Panc1 (cell line): ENCODE measurements at regions of chr10 and their contacts with region 1.

Region 1: GRCh38 chr10:73459683-73460314 is 26.4 kb upstream of the MSS51 start:
- DNase-seq: no peak
- ATAC-seq: no peak
- H3K4me3 ChIP-seq: no peak overlapping the region
- H3K27ac ChIP-seq: no peak overlapping the region
- H3K4me1 ChIP-seq: no peaks in the 10 kb centered on the region
- H3K27me3 ChIP-seq: no peaks in the 10 kb centered on the region
- CTCF ChIP-seq: no peak

Region 2: GRCh38 chr10:73480158-73480557 is 20.4 kb after region 1 on chr10:
- CTCF ChIA-PET with region 1: no interaction called
- POLR2A ChIA-PET with region 1: interaction called, 10 read pairs
- in situ Hi-C with region 1: no loop called
- intact Hi-C with region 1: no loop called
- DNase-seq: no peak
- ATAC-seq: no peak
- H3K4me3 ChIP-seq: no peak overlapping the region
- H3K27ac ChIP-seq: no peak overlapping the region
- H3K4me1 ChIP-seq: no peaks in the 10 kb centered on the region
- H3K27me3 ChIP-seq: no peaks in the 10 kb centered on the region
- CTCF ChIP-seq: no peak